HAP-1 (cell line): ENCODE measurements at regions of chr3 and their contacts with region 1.

Region 1: DNA sequence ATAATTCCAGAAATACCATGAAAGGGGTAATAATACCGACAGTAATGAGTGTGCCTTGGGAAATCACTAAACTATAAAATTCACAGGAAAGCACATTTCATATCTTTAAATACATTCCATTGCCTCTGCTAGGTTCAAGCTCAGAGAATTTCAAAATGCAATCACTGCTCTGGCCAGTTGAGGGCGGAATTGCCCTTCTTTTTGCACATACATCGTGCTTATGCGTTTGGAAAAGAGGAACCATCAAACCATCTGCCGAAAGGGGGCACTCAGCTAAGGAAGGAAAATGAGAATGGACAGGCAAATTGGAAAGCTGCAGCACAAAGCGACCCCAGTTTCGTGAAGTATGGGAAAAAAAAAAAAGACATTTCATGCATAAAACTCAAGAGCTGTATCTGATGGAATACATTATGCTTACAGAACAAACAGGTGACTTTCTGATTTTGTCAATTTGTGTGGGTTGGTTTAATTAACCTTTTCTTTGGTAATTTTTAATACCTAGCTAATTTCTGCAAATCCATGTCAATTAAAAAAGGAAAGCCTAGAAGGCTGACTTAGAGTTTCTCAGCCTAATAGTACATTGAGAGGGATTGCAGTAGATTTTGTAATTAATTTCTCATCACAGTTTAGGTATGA is 61.4 kb downstream of the TUSC7 start:
- DNase-seq: peak; percentile 88 to 89
- H3K4me3 ChIP-seq: no peak overlapping the region
- H3K4me1 ChIP-seq: peaks cover 4% of the 10 kb centered on the region; the same call in 1 of the 2 replicates
- H3K27me3 ChIP-seq: no peaks in the 10 kb centered on the region

Region 2: GRCh38 chr3:116140100-116140689 is 630.7 kb before region 1 on chr3:
- in situ Hi-C with region 1: loop called (anchors 25 kb)
- DNase-seq: peak in 1 of 2 experiments; percentile 27
- H3K4me3 ChIP-seq: no peak overlapping the region
- H3K4me1 ChIP-seq: no peaks in the 10 kb centered on the region
- H3K27me3 ChIP-seq: no peaks in the 10 kb centered on the region; the same call in 1 of the 2 replicates